Activated B cell treated with CpG ODN at 0.5 μM for 24 hours (primary cell): ENCODE measurements at regions of chr3 and their contacts with region 1.

Region 1: GRCh38 chr3:52056968-52057805 is 816 bp upstream of the DUSP7 start:
- DNase-seq: peak; percentile 92
- ATAC-seq: peak; percentile 85
- H3K4me3 Mint-ChIP-seq: peak overlapping the region; percentile 88
- H3K27ac Mint-ChIP-seq: peak overlapping the region; percentile 88
- H3K4me1 Mint-ChIP-seq: peaks cover 49% of the 10 kb centered on the region
- H3K27me3 Mint-ChIP-seq: no peaks in the 10 kb centered on the region
- CTCF ChIP-seq: no peak

Region 2: DNA sequence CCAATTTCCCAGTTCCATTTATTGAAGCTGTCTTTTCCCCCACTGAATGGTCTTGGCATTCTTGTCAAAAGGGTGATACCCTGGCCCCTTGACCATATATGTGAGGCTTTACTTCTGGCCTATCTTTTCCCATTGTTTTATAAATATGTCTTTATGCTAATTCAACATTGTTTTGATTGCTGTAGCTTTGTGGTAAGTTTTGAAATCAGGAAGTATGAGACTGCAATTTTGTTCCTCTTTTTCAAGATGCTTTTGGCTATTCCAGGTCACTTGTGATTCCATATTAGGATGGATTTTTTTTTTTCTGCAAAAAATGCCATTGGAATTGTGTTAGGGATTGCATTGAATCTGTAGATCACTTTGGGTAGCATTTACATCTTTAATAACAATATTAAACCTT is 813.3 kb before region 1 on chr3:
- CTCF ChIA-PET with region 1: no interaction called
- POLR2A ChIA-PET with region 1: no interaction called
- intact Hi-C with region 1: no loop called
- DNase-seq: no peak
- ATAC-seq: no peak
- H3K4me3 Mint-ChIP-seq: no peak overlapping the region
- H3K27ac Mint-ChIP-seq: no peak overlapping the region
- H3K4me1 Mint-ChIP-seq: peaks cover 1% of the 10 kb centered on the region
- H3K27me3 Mint-ChIP-seq: peaks cover 15% of the 10 kb centered on the region
- CTCF ChIP-seq: no peak

Region 3: GRCh38 chr3:51941798-51942602 is 115.2 kb before region 1 on chr3 and contains the starts of genes PARP3 and RRP9:
- CTCF ChIA-PET with region 1: interaction called, 6 read pairs
- POLR2A ChIA-PET with region 1: interaction called, 4 read pairs
- intact Hi-C with region 1: loop called (anchors 1 kb)
- DNase-seq: peak; percentile 96
- ATAC-seq: peak; percentile 94
- H3K4me3 Mint-ChIP-seq: peak within 1 kb of the TSS; percentile 90
- H3K27ac Mint-ChIP-seq: peak within 1 kb of the TSS; percentile 77
- H3K4me1 Mint-ChIP-seq: peaks cover 38% of the 10 kb centered on the region
- H3K27me3 Mint-ChIP-seq: no peaks in the 10 kb centered on the region
- CTCF ChIP-seq: peak; percentile 34
- total RNA-seq, gene PARP3: 9.7 and 12.7 TPM in 2 replicates
- total RNA-seq, gene RRP9: 30.7 and 32.4 TPM in 2 replicates

Region 4: GRCh38 chr3:51995346-51996163 is 61.6 kb before region 1 on chr3 and contains the start of gene RPL29:
- CTCF ChIA-PET with region 1: interaction called, 12 read pairs
- POLR2A ChIA-PET with region 1: interaction called, 22 read pairs
- intact Hi-C with region 1: no loop called
- DNase-seq: peak; percentile 84
- ATAC-seq: peak; percentile 98
- H3K4me3 Mint-ChIP-seq: peak within 1 kb of the TSS; percentile 100
- H3K27ac Mint-ChIP-seq: peak within 1 kb of the TSS; percentile 100
- H3K4me1 Mint-ChIP-seq: peaks cover 37% of the 10 kb centered on the region
- H3K27me3 Mint-ChIP-seq: no peaks in the 10 kb centered on the region
- CTCF ChIP-seq: no peak
- total RNA-seq, gene RPL29: 1,884 and 2,140 TPM in 2 replicates

Region 5: DNA sequence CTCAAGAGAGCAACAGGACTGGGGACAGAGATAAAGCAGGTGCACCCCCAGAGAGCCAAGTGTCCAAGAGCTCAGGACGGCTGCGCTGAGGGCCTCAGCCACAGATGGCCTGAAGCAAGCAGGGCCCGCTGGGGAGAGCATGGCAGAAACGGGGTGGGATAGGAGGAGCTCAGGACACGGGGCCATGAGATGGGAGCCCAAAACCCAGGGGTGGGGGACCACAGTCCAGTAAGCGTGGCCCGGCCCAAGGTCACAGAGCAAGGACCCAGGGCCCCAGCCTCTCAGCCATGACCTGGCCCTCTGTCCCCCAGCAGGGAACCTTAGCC is 10.3 kb before region 1 on chr3:
- CTCF ChIA-PET with region 1: no interaction called
- POLR2A ChIA-PET with region 1: no interaction called
- intact Hi-C with region 1: no loop called
- DNase-seq: no peak
- ATAC-seq: no peak
- H3K4me3 Mint-ChIP-seq: no peak overlapping the region
- H3K27ac Mint-ChIP-seq: no peak overlapping the region
- H3K4me1 Mint-ChIP-seq: peaks cover 4% of the 10 kb centered on the region
- H3K27me3 Mint-ChIP-seq: no peaks in the 10 kb centered on the region
- CTCF ChIP-seq: no peak

Region 6: DNA sequence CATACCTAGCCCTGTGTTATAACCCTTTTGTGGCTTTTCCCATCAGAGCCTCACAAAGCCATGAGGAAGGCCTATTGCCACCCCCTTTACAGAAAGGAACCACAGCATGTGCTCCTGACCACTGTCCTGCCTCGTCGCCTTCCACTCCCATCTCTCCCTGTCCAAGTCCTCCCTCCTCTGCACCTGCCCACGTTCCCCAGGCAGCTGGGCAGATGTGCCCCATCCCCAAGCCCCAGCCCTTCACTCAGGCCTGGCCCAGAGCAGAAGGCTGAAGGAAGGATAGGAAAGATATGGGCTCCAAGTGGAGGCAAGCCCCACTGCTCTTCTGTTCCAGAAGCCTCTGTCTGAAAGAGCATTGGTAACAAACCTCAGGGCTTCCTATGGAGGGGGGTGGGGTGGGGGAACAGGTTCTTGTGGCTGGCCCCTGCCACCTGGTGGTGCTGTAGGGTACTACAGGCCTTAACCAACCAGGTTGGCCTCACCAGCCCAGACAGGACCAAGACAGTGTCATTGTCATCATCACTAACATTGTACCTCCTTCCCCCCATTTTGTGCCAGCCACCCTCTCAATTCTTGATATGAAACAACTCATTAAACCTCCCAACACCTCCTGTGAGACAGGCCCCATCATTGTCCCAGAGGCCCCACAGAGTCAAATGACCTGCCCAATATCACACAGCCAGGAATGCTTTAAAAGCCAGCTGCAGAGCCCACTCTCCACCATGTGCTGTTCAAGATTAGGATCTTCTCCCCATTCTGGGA is 87.0 kb after region 1 on chr3:
- CTCF ChIA-PET with region 1: interaction called, 28 read pairs
- POLR2A ChIA-PET with region 1: interaction called, 3 read pairs
- intact Hi-C with region 1: loop called (anchors 1 kb)
- DNase-seq: peak; percentile 73
- ATAC-seq: peak; percentile 100
- H3K4me3 Mint-ChIP-seq: no peak overlapping the region
- H3K27ac Mint-ChIP-seq: no peak overlapping the region
- H3K4me1 Mint-ChIP-seq: peaks cover 4% of the 10 kb centered on the region
- H3K27me3 Mint-ChIP-seq: no peaks in the 10 kb centered on the region
- CTCF ChIP-seq: peak; percentile 66

Region 7: GRCh38 chr3:52225452-52226228 is 168.5 kb after region 1 on chr3 and contains the start of gene TLR9:
- CTCF ChIA-PET with region 1: no interaction called
- POLR2A ChIA-PET with region 1: interaction called, 6 read pairs
- intact Hi-C with region 1: loop called (anchors 1 kb)
- DNase-seq: peak; percentile 77
- ATAC-seq: peak; percentile 87
- H3K4me3 Mint-ChIP-seq: peak within 1 kb of the TSS; percentile 90
- H3K27ac Mint-ChIP-seq: peak within 1 kb of the TSS; percentile 97
- H3K4me1 Mint-ChIP-seq: peaks cover 77% of the 10 kb centered on the region
- H3K27me3 Mint-ChIP-seq: no peaks in the 10 kb centered on the region
- CTCF ChIP-seq: no peak
- total RNA-seq, gene TLR9: 10.4 and 11.4 TPM in 2 replicates

Region 8: DNA sequence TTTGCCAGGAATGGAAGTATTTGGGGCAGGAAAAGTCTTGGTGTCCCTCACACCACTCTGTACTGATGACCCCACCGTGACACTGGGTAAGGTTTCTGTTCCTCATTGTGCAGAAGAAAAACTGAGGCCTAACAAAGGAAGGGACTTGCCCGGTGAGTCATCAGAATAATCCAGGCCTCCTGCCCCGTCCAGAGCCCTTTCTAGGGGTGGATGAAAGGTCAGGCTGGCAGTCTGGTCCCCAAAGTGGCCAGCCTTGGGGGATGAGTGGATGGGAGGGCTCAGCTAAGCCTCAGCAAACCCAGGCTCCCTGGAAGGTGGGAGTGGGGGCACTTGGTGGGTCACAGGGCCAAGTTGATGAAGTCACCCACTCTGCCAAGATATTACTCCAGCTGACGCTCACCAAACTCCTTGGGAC is 256.6 kb after region 1 on chr3:
- CTCF ChIA-PET with region 1: no interaction called
- POLR2A ChIA-PET with region 1: interaction called, 7 read pairs
- intact Hi-C with region 1: loop called (anchors 10 kb)
- DNase-seq: peak; percentile 55
- ATAC-seq: peak; percentile 77
- H3K4me3 Mint-ChIP-seq: peak overlapping the region; percentile 55
- H3K27ac Mint-ChIP-seq: peak overlapping the region; percentile 87
- H3K4me1 Mint-ChIP-seq: peaks cover 78% of the 10 kb centered on the region
- H3K27me3 Mint-ChIP-seq: no peaks in the 10 kb centered on the region
- CTCF ChIP-seq: no peak

Region 9: GRCh38 chr3:53190659-53191058 is 1133.5 kb after region 1 on chr3:
- CTCF ChIA-PET with region 1: no interaction called
- POLR2A ChIA-PET with region 1: no interaction called
- intact Hi-C with region 1: no loop called
- DNase-seq: no peak
- ATAC-seq: no peak
- H3K4me3 Mint-ChIP-seq: no peak overlapping the region
- H3K27ac Mint-ChIP-seq: peak overlapping the region; percentile 62
- H3K4me1 Mint-ChIP-seq: peaks cover 41% of the 10 kb centered on the region
- H3K27me3 Mint-ChIP-seq: no peaks in the 10 kb centered on the region
- CTCF ChIP-seq: no peak